CD4-positive, alpha-beta T cell (primary cell): ENCODE measurements at regions of chr6 and their contacts with region 1.

Region 1: DNA sequence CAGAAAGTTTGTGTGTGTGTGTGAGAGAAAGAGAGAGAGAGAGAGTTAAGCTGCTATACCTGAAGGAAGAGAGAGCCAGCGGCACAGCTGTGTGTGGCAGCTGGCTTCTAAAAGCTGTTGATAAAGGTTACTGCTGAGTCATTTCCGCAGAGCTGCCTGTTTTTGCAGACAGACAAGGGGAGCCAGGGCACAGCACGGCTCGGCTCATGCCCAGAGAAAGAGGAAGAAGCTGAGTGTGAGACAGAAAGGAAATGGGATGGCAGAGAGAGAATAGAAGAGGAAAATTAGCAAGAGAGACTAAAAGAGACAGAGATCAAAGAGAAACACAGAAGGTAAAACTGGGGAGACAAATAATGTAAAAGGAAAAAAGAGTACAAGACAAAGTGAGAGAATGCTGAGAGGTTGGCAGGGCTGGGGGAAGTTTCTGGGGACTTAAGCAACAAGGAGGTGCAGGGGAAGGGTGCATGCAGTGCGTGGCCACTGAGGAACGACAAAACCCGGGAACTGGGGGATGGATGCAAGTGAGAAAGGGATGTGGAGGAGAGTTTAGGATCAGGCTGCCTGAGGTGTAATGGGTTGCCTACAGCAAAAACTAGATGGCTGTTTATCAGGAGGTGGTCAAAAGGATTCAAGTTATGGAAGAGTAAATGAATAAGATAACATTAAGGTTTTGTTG is 22.7 kb downstream of the HLA-A start:
- DNase-seq: peak; percentile 53 to 94 (median 75)
- ATAC-seq: peak; percentile 91
- H3K4me3 ChIP-seq: peak overlapping the region; percentile 56
- H3K4me3 Mint-ChIP-seq: peak overlapping the region; percentile 77
- H3K27ac ChIP-seq: peak overlapping the region; percentile 38 to 74
- H3K27ac Mint-ChIP-seq: peak overlapping the region; percentile 82
- H3K4me1 ChIP-seq: peaks cover 39% of the 10 kb centered on the region
- H3K4me1 Mint-ChIP-seq: peaks cover 39% of the 10 kb centered on the region
- H3K27me3 ChIP-seq: no peaks in the 10 kb centered on the region
- H3K27me3 Mint-ChIP-seq: no peaks in the 10 kb centered on the region
- CTCF ChIP-seq: no peak

Region 2: DNA sequence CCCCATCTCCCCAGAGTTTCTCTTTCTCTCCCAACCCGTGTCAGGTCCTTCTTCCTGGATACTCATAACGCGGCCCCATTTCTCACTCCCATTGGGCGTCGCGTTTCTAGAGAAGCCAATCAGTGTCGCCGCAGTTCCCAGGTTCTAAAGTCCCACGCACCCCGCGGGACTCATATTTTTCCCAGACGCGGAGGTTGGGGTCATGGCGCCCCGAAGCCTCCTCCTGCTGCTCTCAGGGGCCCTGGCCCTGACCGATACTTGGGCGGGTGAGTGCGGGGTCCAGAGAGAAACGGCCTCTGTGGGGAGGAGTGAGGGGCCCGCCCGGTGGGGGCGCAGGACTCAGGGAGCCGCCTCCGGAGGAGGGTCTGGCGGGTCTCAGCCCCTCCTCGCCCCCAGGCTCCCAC is 241.8 kb before region 1 on chr6 and contains the start of gene HLA-F:
- CTCF ChIA-PET with region 1: no interaction called
- POLR2A ChIA-PET with region 1: interaction called, 3 read pairs
- intact Hi-C with region 1: loop called in 1 of 2 experiments (anchors 10 kb)
- DNase-seq: peak in 13 of 14 experiments; percentile 69 to 96 (median 79)
- ATAC-seq: peak; percentile 90
- H3K4me3 ChIP-seq: peak within 1 kb of the TSS; percentile 100
- H3K4me3 Mint-ChIP-seq: peak within 1 kb of the TSS; percentile 97
- H3K27ac ChIP-seq: peak within 1 kb of the TSS; percentile 99 to 100
- H3K27ac Mint-ChIP-seq: peak within 1 kb of the TSS; percentile 95
- H3K4me1 ChIP-seq: peaks cover 63% of the 10 kb centered on the region
- H3K4me1 Mint-ChIP-seq: peaks cover 70% of the 10 kb centered on the region
- H3K27me3 ChIP-seq: no peaks in the 10 kb centered on the region
- H3K27me3 Mint-ChIP-seq: no peaks in the 10 kb centered on the region
- CTCF ChIP-seq: no peak
- total RNA-seq, gene HLA-F: 560 TPM

Region 3: DNA sequence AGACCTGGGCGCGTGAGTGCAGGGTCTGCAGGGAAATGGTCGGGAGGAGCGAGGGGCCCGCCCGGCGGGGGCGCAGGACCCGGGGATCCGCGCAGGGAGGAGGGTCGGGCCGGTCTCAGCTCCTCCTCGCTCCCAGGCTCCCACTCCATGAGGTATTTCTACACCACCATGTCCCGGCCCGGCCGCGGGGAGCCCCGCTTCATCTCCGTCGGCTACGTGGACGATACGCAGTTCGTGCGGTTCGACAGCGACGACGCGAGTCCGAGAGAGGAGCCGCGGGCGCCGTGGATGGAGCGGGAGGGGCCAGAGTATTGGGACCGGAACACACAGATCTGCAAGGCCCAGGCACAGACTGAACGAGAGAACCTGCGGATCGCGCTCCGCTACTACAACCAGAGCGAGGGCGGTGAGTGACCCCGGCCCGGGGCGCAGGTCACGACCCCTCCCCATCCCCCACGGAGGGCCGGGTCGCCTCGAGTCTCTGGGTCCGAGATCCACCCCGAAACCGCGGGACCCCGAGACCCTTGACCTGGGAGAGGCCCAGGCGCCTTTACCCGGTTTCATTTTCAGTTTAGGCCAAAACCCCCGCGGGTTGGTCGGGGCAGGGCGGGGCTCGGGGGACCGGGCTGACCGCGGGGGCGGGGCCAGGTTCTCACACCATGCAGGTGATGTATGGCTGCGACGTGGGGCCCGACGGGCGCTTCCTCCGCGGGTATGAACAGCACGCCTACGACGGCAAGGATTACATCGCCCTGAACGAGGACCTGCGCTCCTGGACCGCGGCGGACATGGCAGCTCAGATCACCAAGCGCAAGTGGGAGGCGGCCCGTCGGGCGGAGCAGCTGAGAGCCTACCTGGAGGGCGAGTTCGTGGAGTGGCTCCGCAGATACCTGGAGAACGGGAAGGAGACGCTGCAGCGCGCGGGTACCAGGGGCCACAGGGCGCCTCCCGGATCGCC is 76.9 kb before region 1 on chr6:
- CTCF ChIA-PET with region 1: no interaction called
- POLR2A ChIA-PET with region 1: interaction called, 9 read pairs
- intact Hi-C with region 1: loop called (anchors 2 to 5 kb)
- DNase-seq: peak; percentile 66 to 95 (median 84)
- ATAC-seq: peak; percentile 80
- H3K4me3 ChIP-seq: peak overlapping the region; percentile 86
- H3K4me3 Mint-ChIP-seq: peak overlapping the region; percentile 93
- H3K27ac ChIP-seq: peak overlapping the region; percentile 73 to 89
- H3K27ac Mint-ChIP-seq: peak overlapping the region; percentile 97
- H3K4me1 ChIP-seq: peaks cover 22% of the 10 kb centered on the region
- H3K4me1 Mint-ChIP-seq: peaks cover 43% of the 10 kb centered on the region
- H3K27me3 ChIP-seq: no peaks in the 10 kb centered on the region
- H3K27me3 Mint-ChIP-seq: no peaks in the 10 kb centered on the region
- CTCF ChIP-seq: no peak

Region 4: GRCh38 chr6:29942275-29943052 is 22.6 kb before region 1 on chr6 and contains the start of gene HLA-A:
- CTCF ChIA-PET with region 1: interaction called, 5 read pairs
- POLR2A ChIA-PET with region 1: interaction called, 141 read pairs
- intact Hi-C with region 1: loop called (anchors 1 kb)
- DNase-seq: peak; percentile 87 to 99 (median 91)
- ATAC-seq: peak; percentile 89
- H3K4me3 ChIP-seq: peak within 1 kb of the TSS; percentile 82
- H3K4me3 Mint-ChIP-seq: peak within 1 kb of the TSS; percentile 97
- H3K27ac ChIP-seq: peak within 1 kb of the TSS; percentile 96 to 99
- H3K27ac Mint-ChIP-seq: peak within 1 kb of the TSS; percentile 100
- H3K4me1 ChIP-seq: peaks cover 59% of the 10 kb centered on the region
- H3K4me1 Mint-ChIP-seq: peaks cover 60% of the 10 kb centered on the region
- H3K27me3 ChIP-seq: no peaks in the 10 kb centered on the region
- H3K27me3 Mint-ChIP-seq: peaks cover 4% of the 10 kb centered on the region
- CTCF ChIP-seq: no peak
- total RNA-seq, gene HLA-A: 1,767 to 1,801 TPM

Region 5: GRCh38 chr6:29976588-29977424 is 11.8 kb after region 1 on chr6:
- CTCF ChIA-PET with region 1: interaction called, 5 read pairs
- POLR2A ChIA-PET with region 1: interaction called, 28 read pairs
- intact Hi-C with region 1: no loop called
- DNase-seq: peak in 12 of 14 experiments; percentile 26 to 82 (median 54)
- ATAC-seq: peak; percentile 79
- H3K4me3 ChIP-seq: peak overlapping the region; percentile 62
- H3K4me3 Mint-ChIP-seq: peak overlapping the region; percentile 91
- H3K27ac ChIP-seq: no peak overlapping the region
- H3K27ac Mint-ChIP-seq: no peak overlapping the region
- H3K4me1 ChIP-seq: peaks cover 38% of the 10 kb centered on the region
- H3K4me1 Mint-ChIP-seq: peaks cover 36% of the 10 kb centered on the region
- H3K27me3 ChIP-seq: peaks cover 33 to 36% of the 10 kb centered on the region in 2 experiments
- H3K27me3 Mint-ChIP-seq: peaks cover 59% of the 10 kb centered on the region
- CTCF ChIP-seq: peak; percentile 27

Region 6: GRCh38 chr6:30000156-30000791 is 35.2 kb after region 1 on chr6:
- CTCF ChIA-PET with region 1: no interaction called
- POLR2A ChIA-PET with region 1: no interaction called
- intact Hi-C with region 1: no loop called
- DNase-seq: no peak
- ATAC-seq: no peak
- H3K4me3 ChIP-seq: no peak overlapping the region
- H3K4me3 Mint-ChIP-seq: no peak overlapping the region
- H3K27ac ChIP-seq: no peak overlapping the region
- H3K27ac Mint-ChIP-seq: no peak overlapping the region
- H3K4me1 ChIP-seq: no peaks in the 10 kb centered on the region
- H3K4me1 Mint-ChIP-seq: no peaks in the 10 kb centered on the region
- H3K27me3 ChIP-seq: no peaks in the 10 kb centered on the region
- H3K27me3 Mint-ChIP-seq: peaks cover 5% of the 10 kb centered on the region
- CTCF ChIP-seq: no peak

Region 7: DNA sequence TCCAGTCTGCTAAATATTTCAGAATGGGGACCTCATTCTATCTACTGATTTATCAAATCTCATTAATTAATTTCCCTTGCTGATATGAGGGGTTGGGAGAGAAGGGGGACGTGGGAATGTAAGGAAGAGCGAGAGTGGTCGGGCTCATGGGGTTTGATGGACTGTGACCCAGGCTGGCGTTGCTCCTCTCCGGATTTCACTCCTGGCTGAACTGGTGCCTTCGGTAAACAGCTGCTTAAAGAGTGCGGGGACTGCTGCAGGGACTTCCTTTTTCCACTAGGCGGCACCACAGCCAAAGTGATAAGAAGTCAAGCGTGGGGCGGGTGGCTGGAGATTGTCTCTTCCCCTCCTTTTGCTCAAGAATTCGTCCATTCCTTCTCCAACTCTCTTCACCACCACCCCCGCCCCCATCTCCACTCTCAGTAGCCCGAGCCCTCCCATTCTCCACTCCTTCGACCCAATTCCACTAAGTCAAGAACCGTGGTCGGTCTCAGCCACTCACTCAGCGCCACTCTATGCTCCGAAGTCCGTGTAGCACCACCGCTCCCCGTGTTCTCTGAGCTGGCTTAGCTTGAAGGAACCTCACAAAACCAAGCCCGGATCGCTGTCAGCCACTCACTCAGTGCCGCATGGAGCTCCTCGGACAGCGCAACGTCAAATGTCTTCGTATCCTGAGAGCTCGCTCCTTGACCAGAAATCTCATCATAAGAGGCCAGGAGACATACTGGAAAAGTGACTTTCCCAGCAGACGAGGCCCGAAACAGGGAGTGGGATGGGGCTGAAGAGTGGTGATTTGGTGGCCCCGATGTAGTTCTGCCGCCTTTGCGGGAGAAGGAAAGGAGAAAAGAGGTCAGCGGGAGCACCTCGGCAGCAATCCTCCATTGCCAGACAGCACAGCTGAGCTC is 138.2 kb after region 1 on chr6:
- CTCF ChIA-PET with region 1: no interaction called
- POLR2A ChIA-PET with region 1: no interaction called
- intact Hi-C with region 1: no loop called
- DNase-seq: peak; percentile 71 to 91 (median 79)
- ATAC-seq: peak; percentile 88
- H3K4me3 ChIP-seq: peak overlapping the region; percentile 60
- H3K4me3 Mint-ChIP-seq: peak overlapping the region; percentile 89
- H3K27ac ChIP-seq: no peak overlapping the region
- H3K27ac Mint-ChIP-seq: peak overlapping the region; percentile 65
- H3K4me1 ChIP-seq: peaks cover 44% of the 10 kb centered on the region
- H3K4me1 Mint-ChIP-seq: peaks cover 46% of the 10 kb centered on the region
- H3K27me3 ChIP-seq: peaks cover 19 to 21% of the 10 kb centered on the region in 2 experiments
- H3K27me3 Mint-ChIP-seq: peaks cover 61% of the 10 kb centered on the region
- CTCF ChIP-seq: peak; percentile 85

Region 8: DNA sequence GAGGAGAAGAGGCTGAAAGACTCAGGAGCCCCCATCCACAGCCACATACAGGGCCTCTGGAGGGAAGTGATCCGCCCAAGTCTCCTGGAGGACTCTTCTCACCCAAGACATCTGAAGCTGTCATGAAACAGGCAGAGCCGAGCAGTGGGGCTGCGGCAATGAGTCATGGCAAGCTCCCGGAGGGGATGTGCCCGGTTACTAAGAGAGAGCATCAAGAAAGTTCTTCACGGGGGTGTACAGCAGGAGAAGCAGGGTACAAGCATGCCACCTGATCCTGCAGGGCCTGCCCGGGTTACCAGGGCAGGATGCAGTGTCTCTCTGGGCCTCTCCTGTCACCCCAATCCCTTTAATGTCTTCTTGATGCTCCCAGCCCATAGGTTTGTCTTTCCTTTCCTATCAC is 227.1 kb after region 1 on chr6:
- CTCF ChIA-PET with region 1: no interaction called
- POLR2A ChIA-PET with region 1: no interaction called
- intact Hi-C with region 1: no loop called
- DNase-seq: no peak
- ATAC-seq: no peak
- H3K4me3 ChIP-seq: no peak overlapping the region
- H3K4me3 Mint-ChIP-seq: no peak overlapping the region
- H3K27ac ChIP-seq: no peak overlapping the region
- H3K27ac Mint-ChIP-seq: no peak overlapping the region
- H3K4me1 ChIP-seq: no peaks in the 10 kb centered on the region
- H3K4me1 Mint-ChIP-seq: no peaks in the 10 kb centered on the region
- H3K27me3 ChIP-seq: no peaks in the 10 kb centered on the region
- H3K27me3 Mint-ChIP-seq: no peaks in the 10 kb centered on the region
- CTCF ChIP-seq: no peak

Region 9: GRCh38 chr6:30483677-30484279 is 518.8 kb after region 1 on chr6:
- CTCF ChIA-PET with region 1: no interaction called
- POLR2A ChIA-PET with region 1: no interaction called
- intact Hi-C with region 1: no loop called
- DNase-seq: peak in 5 of 14 experiments; percentile 17 to 78 (median 68)
- ATAC-seq: no peak
- H3K4me3 ChIP-seq: no peak overlapping the region
- H3K4me3 Mint-ChIP-seq: no peak overlapping the region
- H3K27ac ChIP-seq: no peak overlapping the region
- H3K27ac Mint-ChIP-seq: no peak overlapping the region
- H3K4me1 ChIP-seq: peaks cover 36% of the 10 kb centered on the region
- H3K4me1 Mint-ChIP-seq: peaks cover 44% of the 10 kb centered on the region
- H3K27me3 ChIP-seq: peaks cover 18 to 28% of the 10 kb centered on the region in 2 experiments
- H3K27me3 Mint-ChIP-seq: peaks cover 42% of the 10 kb centered on the region
- CTCF ChIP-seq: peak; percentile 94